A549 (cell line): ENCODE measurements at regions of chr9 and their contacts with region 1.

Region 1: GRCh38 chr9:132679946-132680625 is 9.8 kb downstream of the GTF3C4 start:
- DNase-seq: no peak
- ATAC-seq: no peak
- H3K4me3 ChIP-seq: no peak overlapping the region
- H3K27ac ChIP-seq: no peak overlapping the region
- H3K4me1 ChIP-seq: 0 out of 3 replicates have a peak, but pooled peaks cover 4% of the 10 kb centered on the region
- CTCF ChIP-seq: no peak
- EP300 ChIP-seq: no peak
- POLR2A ChIP-seq: no peak
- RAD21 ChIP-seq: no peak

Region 2: GRCh38 chr9:132584601-132585560 is 95.2 kb before region 1 on chr9:
- CTCF ChIA-PET with region 1: no interaction called
- POLR2A ChIA-PET with region 1: no interaction called
- DNase-seq: peak in 1 of 2 experiments; percentile 12
- ATAC-seq: no peak
- H3K4me3 ChIP-seq: no peak overlapping the region
- H3K27ac ChIP-seq: no peak overlapping the region
- H3K4me1 ChIP-seq: peaks cover 21% of the 10 kb centered on the region; the same call in 2 of the 3 replicates
- CTCF ChIP-seq: no peak
- EP300 ChIP-seq: no peak
- POLR2A ChIP-seq: no peak
- RAD21 ChIP-seq: no peak

Region 3: GRCh38 chr9:132690696-132691095 is 10.6 kb after region 1 on chr9:
- CTCF ChIA-PET with region 1: interaction called, 15 read pairs
- POLR2A ChIA-PET with region 1: no interaction called
- DNase-seq: no peak
- ATAC-seq: no peak
- H3K4me3 ChIP-seq: no peak overlapping the region
- H3K27ac ChIP-seq: no peak overlapping the region
- H3K4me1 ChIP-seq: no peaks in the 10 kb centered on the region
- CTCF ChIP-seq: no peak
- EP300 ChIP-seq: no peak
- POLR2A ChIP-seq: no peak
- RAD21 ChIP-seq: no peak

Region 4: GRCh38 chr9:132708769-132709168 is 28.7 kb after region 1 on chr9:
- CTCF ChIA-PET with region 1: no interaction called
- POLR2A ChIA-PET with region 1: no interaction called
- DNase-seq: no peak
- ATAC-seq: no peak
- H3K4me3 ChIP-seq: no peak overlapping the region
- H3K27ac ChIP-seq: no peak overlapping the region
- H3K4me1 ChIP-seq: no peaks in the 10 kb centered on the region
- CTCF ChIP-seq: no peak
- EP300 ChIP-seq: no peak
- POLR2A ChIP-seq: no peak
- RAD21 ChIP-seq: no peak

Region 5: GRCh38 chr9:133023117-133023890 is 343.2 kb after region 1 on chr9:
- CTCF ChIA-PET with region 1: no interaction called
- POLR2A ChIA-PET with region 1: no interaction called
- DNase-seq: peak in 1 of 2 experiments; percentile 22
- ATAC-seq: peak in 1 of 2 experiments; percentile 30; a peak in 3 of 6 replicates
- H3K4me3 ChIP-seq: no peak overlapping the region
- H3K27ac ChIP-seq: no peak overlapping the region
- H3K4me1 ChIP-seq: no peaks in the 10 kb centered on the region
- CTCF ChIP-seq: no peak
- EP300 ChIP-seq: no peak
- POLR2A ChIP-seq: no peak
- RAD21 ChIP-seq: no peak